ENCODE measurements at regions of chr1 and their contacts with region 1.

Region 1: GRCh38 chr1:246566128-246566812 is at the starts of genes CNST and TFB2M:
- DNase-seq: peak; percentile 93 to 100 (median 94)
- ATAC-seq: peak; percentile 84
- H3K4me3 ChIP-seq: peak within 1 kb of the TSS; percentile 85
- H3K27ac ChIP-seq: peak within 1 kb of the TSS; percentile 85
- H3K4me1 ChIP-seq: peaks cover 6 to 18% of the 10 kb centered on the region in 2 experiments
- H3K27me3 ChIP-seq: no peaks in the 10 kb centered on the region
- CTCF ChIP-seq: no peak
- EP300 ChIP-seq: peak; percentile 42; the same call in 1 of the 2 replicates
- POLR2A ChIP-seq: peak; percentile 90
- RAD21 ChIP-seq: no peak; a peak in 1 of 4 replicates
- polyA plus RNA-seq, gene CNST: 17.0 to 22.9 TPM
- polyA plus RNA-seq, gene TFB2M: 141 to 162 TPM

Region 2: GRCh38 chr1:246554201-246554600 is 12.1 kb before region 1 on chr1:
- CTCF ChIA-PET with region 1: no interaction called
- POLR2A ChIA-PET with region 1: interaction called, 12 read pairs
- in situ Hi-C with region 1: no loop called
- intact Hi-C with region 1: no loop called
- DNase-seq: no peak
- ATAC-seq: no peak
- H3K4me3 ChIP-seq: no peak overlapping the region
- H3K27ac ChIP-seq: no peak overlapping the region
- H3K4me1 ChIP-seq: no peaks in the 10 kb centered on the region
- H3K27me3 ChIP-seq: no peaks in the 10 kb centered on the region
- CTCF ChIP-seq: no peak
- EP300 ChIP-seq: no peak
- POLR2A ChIP-seq: no peak
- RAD21 ChIP-seq: no peak

Region 3: DNA sequence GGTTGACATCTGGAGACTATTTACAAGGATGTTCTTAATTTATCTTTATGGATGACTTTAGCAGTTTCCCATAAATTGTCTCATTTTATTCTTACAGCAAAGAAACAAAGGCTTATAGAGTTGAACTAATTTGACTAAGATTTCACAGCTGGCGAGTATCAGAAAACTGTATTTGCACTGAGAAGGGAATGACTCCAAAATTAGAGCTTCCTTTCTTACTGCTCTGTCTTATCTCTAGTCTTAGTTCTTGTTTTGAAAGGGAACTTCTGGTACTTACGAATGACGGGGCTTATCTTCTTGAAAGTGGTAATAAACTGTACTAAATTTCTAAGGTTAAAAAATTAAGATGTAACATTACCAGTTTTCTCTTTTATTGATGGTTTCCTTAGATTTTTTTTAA is 13.5 kb after region 1 on chr1:
- CTCF ChIA-PET with region 1: interaction called, 3 read pairs
- POLR2A ChIA-PET with region 1: interaction called, 26 read pairs
- in situ Hi-C with region 1: no loop called
- intact Hi-C with region 1: loop called (anchors 2 kb)
- DNase-seq: peak in 2 of 4 experiments; percentile 51 to 65
- ATAC-seq: peak; percentile 36
- H3K4me3 ChIP-seq: no peak overlapping the region
- H3K27ac ChIP-seq: peak overlapping the region; percentile 89
- H3K4me1 ChIP-seq: peaks cover 36 to 75% of the 10 kb centered on the region in 2 experiments
- H3K27me3 ChIP-seq: no peaks in the 10 kb centered on the region
- CTCF ChIP-seq: no peak
- EP300 ChIP-seq: peak; percentile 71; the same call in 1 of the 2 replicates
- POLR2A ChIP-seq: no peak
- RAD21 ChIP-seq: no peak

Region 4: DNA sequence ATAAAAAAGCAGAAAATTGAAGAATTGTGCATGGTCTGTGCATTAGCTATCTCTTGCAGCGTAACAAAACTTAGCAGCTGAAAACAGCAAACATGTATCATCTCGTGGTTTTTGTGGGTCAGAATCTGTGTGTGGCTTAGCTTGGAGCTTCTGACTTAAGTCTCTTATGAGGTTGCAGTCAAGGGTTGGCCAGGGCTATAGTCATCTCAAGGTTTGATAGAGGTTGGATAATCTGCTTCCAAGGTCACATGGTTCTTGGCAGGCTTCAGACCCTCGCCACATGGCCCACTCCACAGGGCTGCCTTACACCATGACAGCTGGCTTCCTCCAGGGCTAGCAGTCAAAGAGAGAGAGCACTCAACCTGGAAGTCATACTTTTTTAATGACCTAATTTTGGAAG is 35.9 kb after region 1 on chr1:
- CTCF ChIA-PET with region 1: no interaction called
- POLR2A ChIA-PET with region 1: no interaction called
- in situ Hi-C with region 1: no loop called
- intact Hi-C with region 1: loop called (anchors 5 kb)
- DNase-seq: no peak
- ATAC-seq: no peak
- H3K4me3 ChIP-seq: no peak overlapping the region
- H3K27ac ChIP-seq: no peak overlapping the region
- H3K4me1 ChIP-seq: peaks cover 3 to 4% of the 10 kb centered on the region in 2 experiments; a peak in 2 of 5 replicates
- H3K27me3 ChIP-seq: no peaks in the 10 kb centered on the region
- CTCF ChIP-seq: no peak
- EP300 ChIP-seq: no peak
- POLR2A ChIP-seq: no peak
- RAD21 ChIP-seq: no peak

Region 5: GRCh38 chr1:246647113-246647512 is 80.8 kb after region 1 on chr1:
- CTCF ChIA-PET with region 1: no interaction called
- POLR2A ChIA-PET with region 1: no interaction called
- in situ Hi-C with region 1: no loop called
- intact Hi-C with region 1: loop called (anchors 5 kb)
- DNase-seq: peak; percentile 33 to 55 (median 48)
- ATAC-seq: peak; percentile 95
- H3K4me3 ChIP-seq: no peak overlapping the region
- H3K27ac ChIP-seq: no peak overlapping the region
- H3K4me1 ChIP-seq: no peaks in the 10 kb centered on the region; a peak in 1 of 5 replicates
- H3K27me3 ChIP-seq: no peaks in the 10 kb centered on the region
- CTCF ChIP-seq: peak; percentile 57 to 65 (median 62)
- EP300 ChIP-seq: no peak
- POLR2A ChIP-seq: no peak
- RAD21 ChIP-seq: peak in 1 of 2 experiments; percentile 39; a peak in 1 of 4 replicates

Region 6: GRCh38 chr1:246699095-246699735 is 132.9 kb after region 1 on chr1:
- CTCF ChIA-PET with region 1: no interaction called
- POLR2A ChIA-PET with region 1: no interaction called
- in situ Hi-C with region 1: no loop called
- intact Hi-C with region 1: loop called (anchors 2 kb)
- DNase-seq: peak; percentile 85 to 95 (median 90)
- ATAC-seq: peak; percentile 92
- H3K4me3 ChIP-seq: no peak overlapping the region
- H3K27ac ChIP-seq: peak overlapping the region; percentile 69
- H3K4me1 ChIP-seq: peaks cover 6 to 11% of the 10 kb centered on the region in 2 experiments; a peak in 4 of 5 replicates
- H3K27me3 ChIP-seq: no peaks in the 10 kb centered on the region
- CTCF ChIP-seq: peak; percentile 92 to 97 (median 97)
- EP300 ChIP-seq: peak; percentile 50; the same call in 1 of the 2 replicates
- POLR2A ChIP-seq: no peak; the same call in 1 of the 2 replicates
- RAD21 ChIP-seq: peak; percentile 80 to 90

Region 7: DNA sequence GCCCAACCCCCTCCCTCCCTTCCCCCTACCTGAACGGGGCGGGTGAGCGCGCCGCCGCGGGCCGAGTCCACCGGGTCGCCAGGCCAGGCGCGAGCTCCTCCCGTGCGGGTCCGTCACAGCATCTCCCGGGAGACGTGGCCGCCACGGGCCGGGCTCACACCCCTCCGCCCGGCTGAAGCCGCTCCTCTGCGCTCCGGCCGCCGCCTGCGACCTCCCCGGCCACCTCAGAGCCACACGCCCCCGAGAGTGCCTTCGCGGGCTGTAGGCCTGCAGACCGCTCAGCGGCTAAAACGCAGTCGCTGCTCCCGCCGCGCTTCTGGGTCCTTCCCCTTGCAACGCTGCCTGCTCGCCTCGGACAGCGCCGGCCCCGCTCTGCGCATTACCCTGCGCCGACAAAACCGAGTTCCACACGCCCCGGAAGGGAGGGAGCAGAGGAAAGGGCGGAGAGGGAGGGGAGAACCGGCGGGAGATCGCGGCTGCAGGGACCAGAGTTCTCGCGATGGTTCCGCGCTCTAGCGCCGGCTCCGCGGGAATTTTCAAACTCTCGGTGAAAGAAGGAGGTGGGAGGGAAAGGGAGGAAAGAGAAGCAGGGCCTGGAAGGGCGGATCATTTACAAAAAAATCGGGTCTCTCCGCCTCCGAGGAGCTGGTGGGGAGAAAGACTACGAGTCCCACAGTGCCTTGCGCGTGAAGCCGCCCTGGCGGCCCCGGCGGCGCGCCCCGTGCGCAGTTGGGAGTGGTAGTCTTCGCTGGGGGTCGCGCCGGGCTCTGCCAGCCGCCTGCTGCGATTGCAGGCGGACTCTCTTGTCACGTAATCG is 365.5 kb after region 1 on chr1 and contains the start of gene AHCTF1:
- CTCF ChIA-PET with region 1: no interaction called
- POLR2A ChIA-PET with region 1: no interaction called
- in situ Hi-C with region 1: no loop called
- intact Hi-C with region 1: loop called (anchors 10 kb)
- DNase-seq: peak; percentile 95 to 98 (median 96)
- ATAC-seq: peak; percentile 95
- H3K4me3 ChIP-seq: peak within 1 kb of the TSS; percentile 97
- H3K27ac ChIP-seq: peak within 1 kb of the TSS; percentile 94
- H3K4me1 ChIP-seq: peaks cover 5 to 11% of the 10 kb centered on the region in 2 experiments; a peak in 4 of 5 replicates
- H3K27me3 ChIP-seq: no peaks in the 10 kb centered on the region
- CTCF ChIP-seq: no peak; a peak in 1 of 6 replicates
- EP300 ChIP-seq: no peak; the same call in 1 of the 2 replicates
- POLR2A ChIP-seq: peak; percentile 98
- RAD21 ChIP-seq: peak in 1 of 2 experiments; percentile 3; a peak in 1 of 4 replicates
- polyA plus RNA-seq, gene AHCTF1: 9.4 to 15.4 TPM

Region 8: GRCh38 chr1:247494767-247495166 is 928.5 kb after region 1 on chr1:
- CTCF ChIA-PET with region 1: no interaction called
- POLR2A ChIA-PET with region 1: no interaction called
- in situ Hi-C with region 1: no loop called
- intact Hi-C with region 1: no loop called
- DNase-seq: peak in 1 of 4 experiments; percentile 6
- ATAC-seq: no peak
- H3K4me3 ChIP-seq: no peak overlapping the region
- H3K27ac ChIP-seq: no peak overlapping the region
- H3K4me1 ChIP-seq: no peaks in the 10 kb centered on the region
- H3K27me3 ChIP-seq: peaks cover 0 to 8% of the 10 kb centered on the region in 2 experiments; a peak in 4 of 5 replicates
- CTCF ChIP-seq: no peak
- EP300 ChIP-seq: no peak
- POLR2A ChIP-seq: no peak
- RAD21 ChIP-seq: no peak

Measured in K562 (cell line).